ENCODE measurements at regions of chr21 and their contacts with region 1.

Region 1: DNA sequence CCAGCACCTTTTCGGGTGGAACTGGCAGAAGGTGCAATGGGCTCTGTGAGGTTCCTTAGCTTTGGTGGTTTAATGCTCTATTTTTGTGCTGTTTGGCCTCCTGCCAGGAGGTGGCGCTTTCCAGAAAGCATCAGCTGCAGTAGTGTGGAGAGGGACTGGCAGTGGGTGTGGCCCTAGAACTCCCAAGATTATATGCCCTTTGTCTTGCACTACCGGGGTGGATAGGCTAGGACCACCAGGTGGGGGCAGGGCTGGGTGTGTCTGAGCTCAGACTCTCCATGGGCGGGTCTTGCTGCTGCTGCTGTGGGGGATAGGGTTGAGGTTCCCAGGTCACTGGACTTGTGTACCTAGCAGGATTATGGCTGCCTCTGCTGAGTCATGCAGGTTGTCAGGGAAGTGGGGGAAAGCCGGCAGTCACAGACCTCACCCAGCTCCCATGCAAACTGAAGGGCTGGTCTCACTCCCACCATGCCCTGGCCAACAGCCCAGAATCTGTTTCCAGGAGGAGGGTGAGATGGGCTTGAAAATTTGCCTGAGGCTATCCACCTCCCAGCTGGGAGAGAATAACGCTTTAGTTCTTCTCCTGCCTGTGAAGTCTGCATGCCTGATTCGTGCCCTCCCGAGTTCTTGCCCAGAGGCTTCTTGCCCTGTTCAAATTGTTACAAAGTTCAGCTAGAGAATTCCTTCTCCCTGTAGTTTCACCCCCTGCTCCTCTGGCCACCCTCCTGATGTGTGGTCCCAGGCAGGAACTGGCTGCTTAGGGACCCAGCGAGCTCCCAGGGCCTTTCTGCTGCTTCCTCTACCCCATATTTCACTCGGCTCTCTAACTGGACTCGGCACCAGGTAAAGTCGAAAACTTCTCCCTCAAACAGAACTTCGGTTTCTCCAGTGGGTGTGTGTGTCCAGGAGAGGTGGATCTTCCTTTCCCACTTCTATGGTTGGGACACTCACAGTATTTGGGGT is 76.5 kb upstream of the BTG3 start:
- DNase-seq: peak; percentile 62
- H3K4me3 Mint-ChIP-seq: peak overlapping the region; percentile 41
- H3K27ac Mint-ChIP-seq: peak overlapping the region; percentile 89
- H3K4me1 Mint-ChIP-seq: peaks cover 22% of the 10 kb centered on the region
- H3K27me3 Mint-ChIP-seq: no peaks in the 10 kb centered on the region
- CTCF ChIP-seq: peak; percentile 40

Region 2: GRCh38 chr21:17741806-17742550 is 52.8 kb after region 1 on chr21:
- CTCF ChIA-PET with region 1: no interaction called
- intact Hi-C with region 1: loop called (anchors 5 kb)
- DNase-seq: peak; percentile 11
- H3K4me3 Mint-ChIP-seq: peak overlapping the region; percentile 31
- H3K27ac Mint-ChIP-seq: peak overlapping the region; percentile 74
- H3K4me1 Mint-ChIP-seq: peaks cover 23% of the 10 kb centered on the region
- H3K27me3 Mint-ChIP-seq: no peaks in the 10 kb centered on the region
- CTCF ChIP-seq: no peak

Region 3: DNA sequence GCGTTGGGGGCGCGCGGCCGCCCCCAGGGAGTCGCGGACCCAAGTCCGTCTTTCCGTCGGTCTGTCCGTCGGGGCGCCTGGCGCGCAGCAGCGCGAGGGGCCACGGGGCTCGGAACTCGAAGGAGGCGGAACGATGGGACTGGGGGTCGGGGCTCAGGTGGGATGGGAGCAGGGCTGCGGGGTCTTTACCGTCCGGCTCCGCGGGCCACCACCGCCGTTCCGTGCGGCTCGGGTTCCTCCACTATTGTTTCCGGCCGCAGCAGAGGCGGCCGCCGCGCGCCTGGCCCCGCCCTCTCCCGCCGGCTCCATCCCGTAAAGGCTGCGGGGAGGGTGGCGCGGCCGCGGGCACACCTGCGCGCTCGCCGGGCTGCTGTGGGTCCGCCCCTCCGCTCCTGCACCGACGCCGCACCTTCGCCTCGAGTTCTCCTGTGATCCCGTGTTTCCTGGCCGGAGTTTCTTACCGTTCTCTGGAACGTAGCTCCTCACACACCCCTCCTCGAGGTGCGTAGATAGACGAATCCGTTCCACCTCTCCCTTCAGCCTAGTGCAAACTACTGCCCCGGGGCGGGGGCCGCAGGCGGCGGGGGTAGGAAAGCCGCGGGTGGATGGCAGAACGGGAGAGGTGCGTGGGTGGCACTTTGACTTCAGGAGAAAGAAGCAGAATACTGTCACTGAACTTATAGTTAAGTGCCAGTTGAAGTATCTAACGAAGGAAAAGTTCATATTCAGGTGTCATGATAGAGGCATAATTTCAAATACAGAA is 130.1 kb after region 1 on chr21 and contains the start of gene C21orf91:
- CTCF ChIA-PET with region 1: no interaction called
- intact Hi-C with region 1: loop called (anchors 10 kb)
- DNase-seq: peak; percentile 81
- H3K4me3 Mint-ChIP-seq: peak within 1 kb of the TSS; percentile 86
- H3K27ac Mint-ChIP-seq: peak within 1 kb of the TSS; percentile 100
- H3K4me1 Mint-ChIP-seq: no peaks in the 10 kb centered on the region
- H3K27me3 Mint-ChIP-seq: no peaks in the 10 kb centered on the region
- CTCF ChIP-seq: no peak
- total RNA-seq, gene C21orf91: 9.6 and 10.6 TPM in 2 replicates

Measured in Calu3 (cell line).